ENCODE measurements at regions of chr3 and their contacts with region 1.

Region 1: GRCh38 chr3:160565442-160566403 is at the start of gene KPNA4:
- DNase-seq: peak; percentile 97
- H3K4me3 ChIP-seq: peak within 1 kb of the TSS; percentile 97
- H3K27ac ChIP-seq: peak within 1 kb of the TSS; percentile 77
- H3K4me1 ChIP-seq: peaks cover 42% of the 10 kb centered on the region
- CTCF ChIP-seq: no peak
- total RNA-seq, gene KPNA4: 12.4 and 15.7 TPM in 2 replicates

Region 2: DNA sequence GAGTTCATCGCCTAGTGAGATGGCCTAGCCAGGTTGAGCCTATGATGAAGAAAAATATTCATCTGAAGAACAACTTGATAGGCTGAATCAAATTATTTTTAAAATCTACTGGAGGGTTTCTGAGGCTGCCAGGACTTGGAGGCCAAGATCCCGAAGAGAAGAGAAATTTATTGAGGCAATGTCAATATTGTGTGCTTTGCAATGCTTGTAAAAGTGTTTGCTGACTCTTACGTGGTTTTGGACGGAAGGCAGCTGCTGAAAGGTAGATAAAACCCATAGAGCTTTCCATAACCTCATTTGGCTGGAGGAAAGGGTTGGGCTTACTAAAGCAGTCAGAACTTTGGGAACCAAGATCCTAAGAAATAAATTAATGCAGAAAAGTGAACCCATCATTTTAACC is 938.1 kb before region 1 on chr3:
- CTCF ChIA-PET with region 1: no interaction called
- POLR2A ChIA-PET with region 1: no interaction called
- intact Hi-C with region 1: no loop called
- DNase-seq: no peak
- H3K4me3 ChIP-seq: no peak overlapping the region
- H3K27ac ChIP-seq: no peak overlapping the region
- H3K4me1 ChIP-seq: no peaks in the 10 kb centered on the region
- CTCF ChIP-seq: no peak

Region 3: GRCh38 chr3:160399125-160400029 is 166.3 kb before region 1 on chr3 and contains the starts of genes IFT80 and SMC4:
- CTCF ChIA-PET with region 1: no interaction called
- POLR2A ChIA-PET with region 1: interaction called, 6 read pairs
- intact Hi-C with region 1: loop called (anchors 1 kb)
- DNase-seq: peak; percentile 96
- H3K4me3 ChIP-seq: peak within 1 kb of the TSS; percentile 100
- H3K27ac ChIP-seq: peak within 1 kb of the TSS; percentile 92
- H3K4me1 ChIP-seq: peaks cover 43% of the 10 kb centered on the region
- CTCF ChIP-seq: no peak
- total RNA-seq, gene IFT80: 33.5 and 37.3 TPM in 2 replicates
- total RNA-seq, gene SMC4: 316 and 348 TPM in 2 replicates

Region 4: DNA sequence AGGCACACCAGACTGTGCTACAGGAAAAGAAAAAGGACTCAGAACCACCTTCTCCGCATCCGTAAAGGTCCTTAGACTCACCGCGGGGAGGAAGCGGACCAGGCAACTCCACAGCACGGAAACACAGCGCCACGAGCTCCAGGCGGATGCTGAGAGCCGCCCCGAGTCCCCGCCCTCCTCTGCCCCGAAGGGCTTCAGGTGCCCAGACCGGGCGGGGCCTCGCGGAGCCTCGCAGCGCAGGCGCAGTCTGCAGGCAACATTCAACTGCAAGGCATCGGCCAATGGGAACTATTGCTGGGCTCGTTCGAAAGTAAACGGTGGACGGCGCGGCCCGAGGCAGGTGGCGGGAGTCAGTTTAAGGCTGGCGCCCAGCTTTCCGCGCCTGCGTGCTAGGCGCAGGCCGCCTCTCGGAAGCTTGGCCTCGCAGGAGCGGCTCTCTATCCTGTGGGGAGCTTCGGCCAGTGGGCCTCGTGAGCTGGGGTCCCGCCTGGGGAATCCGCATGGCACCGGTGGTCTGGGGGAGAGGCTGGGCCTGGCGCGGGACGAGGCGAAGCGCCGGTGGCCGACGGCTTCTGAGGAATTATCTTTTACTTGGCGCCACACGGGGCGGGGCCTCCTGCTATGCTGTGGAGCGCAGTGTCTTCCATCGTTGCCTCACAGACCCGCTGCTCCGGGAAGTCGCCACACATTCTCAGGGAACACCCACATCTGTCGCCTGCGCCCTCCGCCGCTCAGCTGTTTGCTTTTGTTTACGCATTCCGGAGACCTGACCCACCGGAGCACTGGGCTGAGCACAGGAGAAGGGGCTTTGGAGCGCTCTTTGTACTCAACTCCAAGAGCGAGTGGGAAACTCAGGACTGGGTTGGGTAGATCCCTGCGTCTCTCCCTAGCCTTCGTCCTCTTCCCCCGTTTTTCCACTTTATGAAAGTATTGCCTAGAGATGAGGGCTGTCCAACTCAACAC is 115.8 kb before region 1 on chr3 and contains the start of gene TRIM59:
- CTCF ChIA-PET with region 1: no interaction called
- POLR2A ChIA-PET with region 1: interaction called, 5 read pairs
- intact Hi-C with region 1: loop called (anchors 2 kb)
- DNase-seq: peak; percentile 98
- H3K4me3 ChIP-seq: peak within 1 kb of the TSS; percentile 86
- H3K27ac ChIP-seq: peak within 1 kb of the TSS; percentile 88
- H3K4me1 ChIP-seq: peaks cover 21% of the 10 kb centered on the region
- CTCF ChIP-seq: no peak
- total RNA-seq, gene TRIM59: 26.1 and 28.7 TPM in 2 replicates

Region 5: DNA sequence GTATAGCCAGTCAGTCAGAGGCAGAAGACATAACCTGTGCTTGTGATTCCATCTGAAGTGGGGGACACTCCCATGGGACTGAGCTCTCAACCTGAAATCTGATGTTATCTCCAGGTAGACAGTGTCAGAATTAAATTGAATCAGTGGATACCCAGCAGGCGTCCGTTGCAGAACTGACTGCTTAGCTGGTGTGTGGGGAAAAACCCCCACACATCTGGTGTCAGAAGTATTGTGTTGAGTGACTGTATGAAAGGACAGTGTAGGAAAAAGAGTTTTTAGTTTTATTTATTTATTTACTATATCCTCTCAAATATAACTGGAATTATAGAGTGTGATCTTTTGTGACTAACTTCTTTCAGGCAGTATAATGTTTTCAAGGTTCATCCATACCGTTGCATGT is 10.7 kb before region 1 on chr3:
- CTCF ChIA-PET with region 1: no interaction called
- POLR2A ChIA-PET with region 1: interaction called, 19 read pairs
- intact Hi-C with region 1: no loop called
- DNase-seq: no peak
- H3K4me3 ChIP-seq: no peak overlapping the region
- H3K27ac ChIP-seq: no peak overlapping the region
- H3K4me1 ChIP-seq: peaks cover 7% of the 10 kb centered on the region
- CTCF ChIP-seq: no peak

Region 6: GRCh38 chr3:160754855-160755747 is 189.4 kb after region 1 on chr3:
- CTCF ChIA-PET with region 1: no interaction called
- POLR2A ChIA-PET with region 1: interaction called, 6 read pairs
- intact Hi-C with region 1: loop called (anchors 1 kb)
- DNase-seq: peak; percentile 95
- H3K4me3 ChIP-seq: peak overlapping the region; percentile 84
- H3K27ac ChIP-seq: peak overlapping the region; percentile 69
- H3K4me1 ChIP-seq: peaks cover 26% of the 10 kb centered on the region
- CTCF ChIP-seq: no peak

Region 7: GRCh38 chr3:161069511-161070263 is 504.0 kb after region 1 on chr3:
- CTCF ChIA-PET with region 1: no interaction called
- POLR2A ChIA-PET with region 1: interaction called, 3 read pairs
- intact Hi-C with region 1: loop called (anchors 10 kb)
- DNase-seq: peak; percentile 87
- H3K4me3 ChIP-seq: peak overlapping the region; percentile 49
- H3K27ac ChIP-seq: peak overlapping the region; percentile 93
- H3K4me1 ChIP-seq: peaks cover 66% of the 10 kb centered on the region
- CTCF ChIP-seq: no peak